CD8-positive, alpha-beta memory T cell (primary cell): ENCODE measurements at regions of chr21 and their contacts with region 1.

Region 1: DNA sequence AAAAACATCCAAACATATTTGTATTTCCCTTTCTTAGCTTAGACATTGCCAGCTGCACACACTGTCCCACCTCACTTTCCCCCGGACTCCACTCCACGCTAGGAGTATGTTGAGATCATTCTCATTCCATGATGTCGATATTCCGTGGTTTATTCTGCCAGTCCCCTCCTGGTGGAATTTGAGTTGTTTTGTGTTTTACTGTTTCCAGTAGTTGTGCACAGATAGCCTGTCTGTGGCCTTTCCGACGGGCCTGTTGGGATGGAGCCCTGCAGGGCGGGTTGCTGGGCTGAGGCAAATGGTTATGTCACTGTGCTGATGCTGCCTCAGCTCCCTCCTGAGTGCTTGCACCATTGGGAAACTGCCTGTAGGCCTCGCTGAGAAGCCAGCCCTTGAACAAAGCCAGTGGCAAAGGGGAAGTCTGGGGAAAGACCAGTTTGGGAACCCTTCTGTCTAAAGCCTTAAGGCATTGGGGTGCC is 12.8 kb downstream of the TRAPPC10 start:
- DNase-seq: no peak
- H3K4me3 ChIP-seq: peak overlapping the region; percentile 7
- H3K4me3 Mint-ChIP-seq: peak overlapping the region in 3 of 7 donors; percentile 20 to 61 (median 31)
- H3K27ac ChIP-seq: peak overlapping the region; percentile 74
- H3K27ac Mint-ChIP-seq: peak overlapping the region; percentile 17 to 85 (median 69)
- H3K4me1 ChIP-seq: peaks cover 82% of the 10 kb centered on the region
- H3K4me1 Mint-ChIP-seq: peaks cover 77 to 94% (median 92%) of the 10 kb centered on the region in 3 donors
- H3K27me3 ChIP-seq: no peaks in the 10 kb centered on the region
- H3K27me3 Mint-ChIP-seq: no peaks in the 10 kb centered on the region

Region 2: DNA sequence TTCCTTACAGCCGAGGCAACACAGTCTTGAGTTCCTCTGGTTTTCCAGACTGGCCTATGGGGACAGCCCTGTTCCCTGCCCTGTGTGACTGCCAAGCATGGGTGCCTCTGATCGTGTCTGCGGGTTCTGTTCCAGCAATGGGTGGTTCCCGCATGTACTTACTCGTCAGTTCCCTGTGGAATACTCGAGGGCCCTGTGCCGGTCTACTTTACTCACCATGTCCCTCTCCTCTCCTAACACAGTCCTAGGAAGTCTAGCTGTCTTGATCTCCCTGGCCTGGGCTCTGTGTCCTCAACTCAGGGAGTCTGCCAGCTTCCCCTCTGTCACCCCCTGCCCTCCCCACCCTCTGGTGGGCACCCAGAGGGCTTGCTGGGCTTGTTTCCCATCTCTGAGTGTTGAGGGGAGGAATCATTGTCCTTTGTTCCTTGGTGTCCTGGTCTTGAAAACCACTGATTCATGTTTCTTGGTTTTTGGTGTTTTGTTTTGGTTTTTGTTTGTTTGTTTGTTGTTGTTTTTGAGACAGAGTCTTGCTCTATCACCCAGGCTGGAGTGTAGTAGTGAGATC is 23.2 kb after region 1 on chr21:
- CTCF ChIA-PET with region 1: no interaction called
- POLR2A ChIA-PET with region 1: interaction called, 11 read pairs
- DNase-seq: no peak
- H3K4me3 ChIP-seq: no peak overlapping the region
- H3K4me3 Mint-ChIP-seq: no peak overlapping the region
- H3K27ac ChIP-seq: no peak overlapping the region
- H3K27ac Mint-ChIP-seq: peak overlapping the region in 6 of 8 donors; percentile 24 to 78 (median 46)
- H3K4me1 ChIP-seq: no peaks in the 10 kb centered on the region
- H3K4me1 Mint-ChIP-seq: peaks cover 32 to 62% (median 35%) of the 10 kb centered on the region in 3 donors
- H3K27me3 ChIP-seq: no peaks in the 10 kb centered on the region
- H3K27me3 Mint-ChIP-seq: no peaks in the 10 kb centered on the region